Activated naive CD4-positive, alpha-beta T cell treated with anti-CD3 and anti-CD28 coated beads for 36 hours (primary cell): ENCODE measurements at regions of chr10 and their contacts with region 1.

Region 1: DNA sequence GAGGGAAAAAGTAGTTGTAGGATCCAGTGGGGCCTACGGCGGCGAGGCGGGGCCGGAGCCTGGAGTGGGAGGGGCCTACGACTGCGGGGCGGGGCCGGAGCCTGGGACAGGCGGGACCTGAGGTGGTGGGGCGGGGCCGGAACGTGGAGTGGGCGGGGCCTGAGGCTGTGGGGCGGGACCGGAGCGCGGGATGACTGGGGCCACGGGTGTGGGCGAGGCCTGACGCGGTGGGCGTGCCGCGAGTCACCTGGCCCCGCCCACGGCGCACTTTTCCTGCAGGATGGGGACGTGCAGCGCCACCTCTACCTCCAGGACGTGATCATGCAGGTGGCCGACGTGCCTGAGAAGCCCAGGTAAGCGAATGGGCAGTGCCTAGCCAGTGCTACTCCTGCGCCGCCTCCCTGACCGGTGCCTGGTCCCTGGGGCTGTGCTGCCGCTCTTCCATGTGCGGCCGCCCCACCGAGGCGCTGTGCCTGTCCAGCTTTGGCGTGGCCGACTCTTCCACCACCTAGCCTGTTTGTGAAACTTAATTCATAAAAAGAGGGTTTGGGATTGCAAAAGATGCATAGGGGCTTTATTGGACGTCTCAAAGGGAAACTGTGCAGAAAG is 501 bp downstream of the ZNF511 start:
- DNase-seq: peak; percentile 95
- H3K4me3 Mint-ChIP-seq: peak overlapping the region; percentile 65
- H3K27ac Mint-ChIP-seq: peak overlapping the region; percentile 71
- H3K4me1 Mint-ChIP-seq: peaks cover 23% of the 10 kb centered on the region
- H3K27me3 Mint-ChIP-seq: no peaks in the 10 kb centered on the region

Region 2: GRCh38 chr10:132904181-132904819 is 404.9 kb before region 1 on chr10:
- CTCF ChIA-PET with region 1: interaction called, 3 read pairs
- intact Hi-C with region 1: loop called (anchors 10 kb)
- DNase-seq: peak; percentile 60
- H3K4me3 Mint-ChIP-seq: no peak overlapping the region
- H3K27ac Mint-ChIP-seq: no peak overlapping the region
- H3K4me1 Mint-ChIP-seq: peaks cover 6% of the 10 kb centered on the region
- H3K27me3 Mint-ChIP-seq: peaks cover 5% of the 10 kb centered on the region

Region 3: DNA sequence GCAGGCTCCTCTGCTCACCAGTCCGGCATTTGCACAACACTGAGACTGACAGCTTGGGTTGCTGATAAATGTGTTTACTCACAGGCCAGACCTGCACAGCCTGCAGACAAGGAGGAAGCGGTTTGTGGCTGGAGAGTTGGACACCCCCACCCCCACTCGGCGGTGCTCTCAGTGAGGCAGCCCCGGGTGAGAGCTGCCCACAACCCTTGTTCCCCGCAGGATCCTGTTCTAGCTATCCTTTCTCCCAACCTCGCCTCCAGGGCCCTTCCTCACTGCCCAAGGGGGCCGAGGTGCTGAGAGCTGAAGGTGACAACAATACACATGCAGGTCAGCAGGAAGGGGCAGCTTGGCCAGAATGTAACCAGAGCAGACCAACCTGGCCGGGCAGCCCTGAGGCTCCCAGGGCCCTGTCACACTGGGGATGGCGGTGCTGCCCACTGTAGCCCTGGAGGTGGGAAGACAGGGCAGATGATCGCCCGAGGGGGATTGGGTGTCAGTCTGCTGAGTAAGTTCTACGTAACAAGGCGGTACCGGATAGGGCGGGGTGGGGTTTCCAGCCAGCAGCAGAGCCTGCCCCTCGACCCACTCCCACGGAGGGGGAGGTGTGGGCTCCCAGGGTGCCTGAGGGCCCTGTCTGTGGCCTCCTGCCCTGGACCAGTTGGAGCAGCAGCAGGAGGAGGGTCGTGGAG is 30.5 kb before region 1 on chr10:
- CTCF ChIA-PET with region 1: interaction called, 9 read pairs
- intact Hi-C with region 1: loop called (anchors 1 kb)
- DNase-seq: no peak
- H3K4me3 Mint-ChIP-seq: no peak overlapping the region
- H3K27ac Mint-ChIP-seq: peak overlapping the region; percentile 19
- H3K4me1 Mint-ChIP-seq: peaks cover 23% of the 10 kb centered on the region
- H3K27me3 Mint-ChIP-seq: no peaks in the 10 kb centered on the region

Region 4: DNA sequence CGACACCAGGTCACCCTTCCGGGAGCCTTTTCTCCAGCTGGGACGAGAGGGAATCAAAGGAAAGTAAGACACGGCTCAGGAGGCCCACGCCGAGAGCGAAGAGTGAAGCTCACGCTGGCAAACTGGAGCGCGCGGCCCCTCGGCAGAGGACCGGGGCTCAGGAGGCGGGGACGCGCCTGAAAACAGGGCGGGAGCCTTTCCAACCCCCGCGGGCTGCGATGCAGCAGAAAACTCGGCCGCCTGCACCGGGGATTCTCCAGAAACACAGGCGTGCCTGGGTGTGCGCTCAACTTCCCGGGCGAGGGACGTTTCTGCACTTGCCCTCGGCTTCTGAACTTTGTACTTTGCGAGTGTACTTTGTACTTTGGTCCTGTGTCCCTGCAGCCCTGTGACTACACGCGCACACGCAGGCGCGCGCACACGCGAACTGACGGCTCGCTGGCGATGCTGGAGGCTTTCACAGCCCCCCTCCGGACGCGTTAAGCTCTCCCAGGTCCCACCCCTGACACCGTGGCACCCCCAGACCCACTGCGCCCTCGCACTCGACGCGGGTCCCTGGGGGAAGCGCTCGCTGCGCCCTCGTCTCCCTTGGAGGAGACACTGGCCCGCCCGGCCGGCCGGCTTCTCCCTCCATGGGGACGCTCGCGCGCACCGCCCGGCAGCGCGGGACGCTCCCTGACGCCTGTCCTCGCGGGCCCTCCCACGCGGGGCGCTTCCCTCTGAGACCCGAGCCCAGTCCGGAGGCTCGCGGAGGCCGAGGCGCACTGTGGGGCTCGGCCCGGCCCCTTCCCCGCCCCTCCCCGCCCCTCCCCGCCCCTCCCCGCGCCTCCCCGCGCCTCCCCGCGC is 69.3 kb after region 1 on chr10:
- CTCF ChIA-PET with region 1: no interaction called
- intact Hi-C with region 1: loop called (anchors 2 kb)
- DNase-seq: peak; percentile 61
- H3K4me3 Mint-ChIP-seq: peak overlapping the region; percentile 74
- H3K27ac Mint-ChIP-seq: peak overlapping the region; percentile 30
- H3K4me1 Mint-ChIP-seq: peaks cover 5% of the 10 kb centered on the region
- H3K27me3 Mint-ChIP-seq: no peaks in the 10 kb centered on the region

Region 5: GRCh38 chr10:133608855-133609254 is 299.6 kb after region 1 on chr10:
- CTCF ChIA-PET with region 1: no interaction called
- intact Hi-C with region 1: loop called (anchors 5 kb)
- DNase-seq: no peak
- H3K4me3 Mint-ChIP-seq: no peak overlapping the region
- H3K27ac Mint-ChIP-seq: no peak overlapping the region
- H3K4me1 Mint-ChIP-seq: no peaks in the 10 kb centered on the region
- H3K27me3 Mint-ChIP-seq: peaks cover 22% of the 10 kb centered on the region